Common myeloid progenitor, CD34-positive (primary cell): ENCODE measurements at regions of chr11 and their contacts with region 1.

Region 1: DNA sequence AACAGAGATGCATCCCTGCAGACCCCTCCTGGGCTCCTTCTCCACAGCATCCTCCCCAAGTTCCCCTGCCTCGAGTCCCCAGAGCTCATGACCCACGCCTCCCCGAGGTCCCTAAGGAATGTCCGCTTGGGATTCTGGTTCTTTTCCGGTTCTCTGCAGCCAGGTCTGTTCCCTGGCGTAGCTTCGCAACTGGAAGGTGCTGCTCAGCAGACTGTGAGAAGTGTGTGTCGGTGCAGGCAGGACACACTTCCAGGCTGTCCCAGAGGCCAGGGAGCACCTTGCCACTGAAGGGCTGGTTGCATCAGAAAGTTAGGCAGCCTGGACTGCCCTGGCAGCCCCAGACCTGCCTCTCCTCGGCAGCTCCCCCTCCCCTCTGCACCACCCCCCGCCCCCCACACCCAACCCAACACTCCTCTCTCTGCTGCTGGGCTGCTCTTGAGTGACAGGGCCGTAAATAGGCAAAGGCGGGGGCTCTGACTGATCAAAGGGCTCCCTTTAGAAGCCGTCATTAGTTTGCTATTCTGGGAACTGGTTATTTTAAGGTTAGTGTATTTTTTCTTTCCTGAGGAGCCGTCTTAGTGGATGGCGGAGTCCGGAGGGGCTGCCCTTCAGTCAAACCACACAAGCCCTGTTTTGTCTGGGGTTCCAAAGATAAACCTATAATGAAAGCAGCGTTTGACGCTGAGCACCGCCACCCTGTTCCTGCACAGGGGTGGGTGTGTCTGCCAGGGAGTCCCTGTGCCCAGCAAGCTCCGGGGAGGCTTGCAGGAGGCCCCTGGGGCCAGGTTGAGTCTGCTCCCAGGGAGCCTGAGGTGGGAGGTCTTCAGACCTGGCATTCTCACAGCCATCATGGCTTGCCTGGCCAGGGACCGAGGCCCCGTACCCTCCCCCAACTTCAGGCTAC is 88.6 kb upstream of the KCNQ1OT1 start:
- DNase-seq: peak in 2 of 3 donors; percentile 33 to 57
- H3K4me3 ChIP-seq: peak overlapping the region in 3 of 7 experiments; percentile 5 to 62 (median 42)
- H3K27ac ChIP-seq: no peak overlapping the region
- H3K4me1 ChIP-seq: peaks cover 0 to 37% (median 21%) of the 10 kb centered on the region in 4 experiments
- H3K27me3 ChIP-seq: no peaks in the 10 kb centered on the region

Region 2: DNA sequence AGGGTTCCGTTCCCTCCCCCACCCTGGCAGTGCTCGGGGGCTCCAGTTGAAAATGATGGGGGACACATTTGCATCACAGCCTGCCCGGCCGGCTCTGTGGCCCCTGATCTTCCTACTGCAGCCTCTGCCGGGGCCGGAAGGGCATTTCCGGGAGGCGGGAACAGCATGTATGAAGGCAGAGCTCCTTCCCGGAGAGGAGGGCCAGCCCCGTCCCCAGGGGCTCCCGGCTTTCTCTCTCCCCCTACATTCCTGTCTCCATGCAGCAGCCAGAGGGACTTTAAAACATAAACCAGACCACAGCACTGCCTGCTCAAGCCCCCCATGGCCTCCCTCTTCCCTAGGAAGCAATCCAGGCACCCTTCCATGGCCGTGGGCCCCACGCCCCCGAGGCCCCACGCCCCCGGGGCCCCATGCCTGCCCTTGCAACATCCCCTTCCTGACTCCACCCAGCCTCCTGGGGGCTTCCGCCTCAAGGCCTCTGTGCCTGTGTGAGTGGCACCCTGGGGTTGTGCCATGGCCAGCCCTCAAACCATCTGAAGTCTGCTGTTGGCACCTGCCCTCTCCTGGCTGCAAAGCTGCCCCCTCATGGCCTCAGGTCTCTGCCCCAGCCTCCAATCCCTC is 24.1 kb after region 1 on chr11:
- CTCF ChIA-PET with region 1: interaction called, 10 read pairs
- POLR2A ChIA-PET with region 1: interaction called, 4 read pairs
- DNase-seq: peak; percentile 44 to 77 (median 73)
- H3K4me3 ChIP-seq: peak overlapping the region in 6 of 7 experiments; percentile 13 to 66 (median 38)
- H3K27ac ChIP-seq: peak overlapping the region in 1 of 2 experiments; percentile 38
- H3K4me1 ChIP-seq: peaks cover 0 to 39% (median 30%) of the 10 kb centered on the region in 4 experiments
- H3K27me3 ChIP-seq: no peaks in the 10 kb centered on the region